Activated CD4-positive, alpha-beta memory T cell treated with anti-CD3 and anti-CD28 coated beads for 36 hours (primary cell): ENCODE measurements at regions of chr17 and their contacts with region 1.

Region 1: DNA sequence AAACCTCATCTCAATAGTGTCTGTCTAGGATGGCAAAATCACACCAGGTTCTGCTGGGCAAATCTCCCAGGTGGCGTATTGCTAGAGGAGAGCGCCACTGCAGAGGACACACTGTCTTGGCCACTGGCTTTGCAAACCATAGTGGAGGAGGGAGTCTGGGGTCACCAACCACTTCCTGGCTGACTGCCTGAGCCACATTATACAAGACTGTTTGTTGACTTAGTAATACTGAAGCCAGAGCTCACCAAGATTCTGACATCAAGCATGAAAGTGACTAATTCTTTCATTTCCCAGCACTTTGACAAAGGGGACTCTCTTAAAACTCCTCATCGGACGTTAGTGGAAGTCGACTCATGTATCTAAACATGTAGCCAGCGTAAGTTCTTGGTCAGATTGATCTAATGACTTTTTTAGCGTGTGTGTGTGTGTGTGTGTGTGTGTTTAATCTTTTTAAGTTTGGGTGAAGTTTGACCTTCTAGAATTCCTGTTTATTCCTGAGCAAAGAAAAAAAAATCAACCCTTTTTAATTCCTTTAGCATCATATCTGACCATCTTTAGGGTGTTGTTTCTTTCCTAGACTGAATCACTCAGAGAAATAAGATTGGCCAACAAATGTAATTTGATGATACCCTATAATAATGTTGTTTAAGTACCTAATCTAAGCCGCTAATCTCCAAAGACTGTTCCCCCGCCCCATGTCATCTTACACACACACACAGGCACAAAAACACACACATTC is 13.7 kb downstream of the PITPNC1 start:
- DNase-seq: peak; percentile 88
- H3K4me3 Mint-ChIP-seq: peak overlapping the region; percentile 65
- H3K27ac Mint-ChIP-seq: peak overlapping the region; percentile 96
- H3K4me1 Mint-ChIP-seq: peaks cover 80% of the 10 kb centered on the region
- H3K27me3 Mint-ChIP-seq: no peaks in the 10 kb centered on the region

Region 2: DNA sequence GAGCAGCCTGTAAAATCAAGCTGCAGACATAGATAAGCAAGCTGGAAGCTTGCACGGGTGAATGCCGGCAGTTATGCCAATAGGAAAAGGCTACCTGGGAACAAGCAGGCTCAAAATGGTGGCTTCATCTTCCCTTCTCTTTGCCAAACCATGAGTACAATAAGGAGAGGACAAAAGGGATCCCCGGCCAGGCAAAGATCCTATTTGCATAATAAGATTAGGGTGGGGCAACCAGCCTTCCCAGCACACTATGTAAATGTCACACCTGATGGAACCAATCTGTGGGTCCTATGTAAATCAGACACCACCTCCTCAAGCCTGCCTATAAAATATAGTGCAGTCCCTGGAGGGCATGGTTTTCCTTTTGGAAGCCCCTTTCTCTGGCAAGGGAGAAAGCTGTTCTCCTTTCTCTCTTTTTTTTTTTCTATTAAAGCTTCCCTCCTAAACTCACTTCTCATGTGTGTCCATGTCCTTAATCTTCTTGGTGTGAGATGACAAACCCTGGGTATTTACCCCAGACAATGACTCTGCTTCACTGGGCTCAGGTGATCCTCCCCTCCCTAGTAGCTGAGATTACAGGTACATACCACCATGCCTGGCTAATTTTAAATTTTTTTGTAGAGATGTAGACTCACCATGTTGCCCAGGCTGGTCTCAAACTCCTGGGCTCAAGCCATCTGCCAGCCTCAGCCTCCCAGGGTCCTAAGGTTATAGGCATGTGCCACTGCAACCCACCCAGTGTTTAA is 68.6 kb before region 1 on chr17:
- CTCF ChIA-PET with region 1: no interaction called
- POLR2A ChIA-PET with region 1: no interaction called
- intact Hi-C with region 1: no loop called
- DNase-seq: no peak
- H3K4me3 Mint-ChIP-seq: no peak overlapping the region
- H3K27ac Mint-ChIP-seq: no peak overlapping the region
- H3K4me1 Mint-ChIP-seq: no peaks in the 10 kb centered on the region
- H3K27me3 Mint-ChIP-seq: no peaks in the 10 kb centered on the region

Region 3: GRCh38 chr17:67343251-67343650 is 47.6 kb before region 1 on chr17:
- CTCF ChIA-PET with region 1: no interaction called
- POLR2A ChIA-PET with region 1: no interaction called
- intact Hi-C with region 1: no loop called
- DNase-seq: no peak
- H3K4me3 Mint-ChIP-seq: no peak overlapping the region
- H3K27ac Mint-ChIP-seq: no peak overlapping the region
- H3K4me1 Mint-ChIP-seq: no peaks in the 10 kb centered on the region
- H3K27me3 Mint-ChIP-seq: no peaks in the 10 kb centered on the region

Region 4: DNA sequence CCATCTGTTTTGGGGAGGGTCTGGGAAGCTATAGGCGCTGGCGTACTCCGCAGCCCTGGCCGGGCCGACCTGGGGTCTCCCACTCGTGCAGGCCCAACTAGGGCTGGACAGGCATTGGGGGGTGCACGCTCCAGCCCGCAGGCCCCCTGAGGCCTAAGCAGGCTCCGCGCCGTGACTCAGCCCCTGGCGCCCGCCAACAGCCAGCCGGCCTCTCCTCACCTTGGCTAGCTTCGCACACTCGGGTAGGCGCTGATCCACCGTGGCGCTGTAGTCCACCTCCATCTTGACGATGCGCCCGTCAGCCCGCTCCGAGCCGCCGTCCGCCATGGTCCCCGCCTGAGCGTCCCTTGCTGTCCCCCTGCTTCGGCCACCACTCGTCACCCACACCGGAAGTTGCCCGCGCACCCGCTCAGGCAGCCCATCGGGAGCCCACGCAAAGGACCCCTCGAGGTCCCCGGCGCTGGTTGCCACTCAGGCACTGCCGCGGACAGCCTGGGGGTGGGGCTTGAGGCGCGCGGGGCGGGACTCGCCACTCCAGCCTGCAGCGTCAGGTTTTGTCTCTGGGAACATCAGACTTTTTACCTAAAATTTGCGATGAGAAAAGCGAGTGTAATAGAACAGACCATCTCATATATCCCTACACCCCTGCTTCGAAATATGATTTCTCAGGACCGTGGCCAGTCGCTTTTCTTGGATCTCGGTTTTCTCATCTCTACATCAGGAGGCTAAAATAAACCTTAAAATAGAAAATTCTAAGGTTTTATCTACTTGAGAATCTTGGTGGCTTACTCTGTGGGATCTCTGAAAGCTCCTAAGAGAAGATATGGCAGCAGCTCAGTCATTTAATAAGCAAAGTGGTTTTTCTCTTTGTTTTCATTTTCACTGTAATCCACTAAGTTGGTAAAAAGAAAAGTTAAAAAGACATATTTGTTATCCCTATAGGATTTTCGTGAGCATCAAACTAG is 24.3 kb before region 1 on chr17 and contains the start of gene PSMD12:
- CTCF ChIA-PET with region 1: interaction called, 3 read pairs
- POLR2A ChIA-PET with region 1: interaction called, 4 read pairs
- intact Hi-C with region 1: loop called (anchors 1 kb)
- DNase-seq: peak; percentile 96
- H3K4me3 Mint-ChIP-seq: peak within 1 kb of the TSS; percentile 95
- H3K27ac Mint-ChIP-seq: peak within 1 kb of the TSS; percentile 98
- H3K4me1 Mint-ChIP-seq: peaks cover 45% of the 10 kb centered on the region
- H3K27me3 Mint-ChIP-seq: no peaks in the 10 kb centered on the region
- total RNA-seq, gene PSMD12: 94.0 to 98.6 TPM

Region 5: DNA sequence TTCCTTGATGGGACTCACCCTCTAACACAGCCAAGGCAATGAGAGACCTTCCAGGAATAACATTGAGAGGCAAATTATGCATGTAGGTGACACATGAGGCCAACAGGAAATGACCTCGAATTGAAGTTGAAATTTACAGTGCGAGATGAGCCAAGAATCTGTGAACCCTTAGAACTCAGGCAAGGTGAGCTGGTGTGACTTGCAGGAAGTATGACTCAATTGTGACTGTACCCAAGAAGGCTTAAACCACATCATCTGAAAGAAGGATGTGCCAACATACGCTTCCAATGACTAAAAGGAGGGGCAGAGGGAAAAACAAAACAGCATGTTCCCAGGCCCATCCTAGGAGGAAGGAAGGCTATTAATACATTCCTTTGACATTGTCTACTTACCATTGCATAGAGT is 31.1 kb after region 1 on chr17:
- CTCF ChIA-PET with region 1: interaction called, 13 read pairs
- POLR2A ChIA-PET with region 1: interaction called, 8 read pairs
- intact Hi-C with region 1: loop called (anchors 1 kb)
- DNase-seq: peak; percentile 71
- H3K4me3 Mint-ChIP-seq: peak overlapping the region; percentile 42
- H3K27ac Mint-ChIP-seq: peak overlapping the region; percentile 91
- H3K4me1 Mint-ChIP-seq: peaks cover 74% of the 10 kb centered on the region
- H3K27me3 Mint-ChIP-seq: no peaks in the 10 kb centered on the region

Region 6: GRCh38 chr17:67431249-67432048 is 40.6 kb after region 1 on chr17:
- CTCF ChIA-PET with region 1: interaction called, 13 read pairs
- POLR2A ChIA-PET with region 1: interaction called, 10 read pairs
- intact Hi-C with region 1: loop called (anchors 1 kb)
- DNase-seq: peak; percentile 36
- H3K4me3 Mint-ChIP-seq: peak overlapping the region; percentile 58
- H3K27ac Mint-ChIP-seq: peak overlapping the region; percentile 89
- H3K4me1 Mint-ChIP-seq: peaks cover 69% of the 10 kb centered on the region
- H3K27me3 Mint-ChIP-seq: no peaks in the 10 kb centered on the region

Region 7: DNA sequence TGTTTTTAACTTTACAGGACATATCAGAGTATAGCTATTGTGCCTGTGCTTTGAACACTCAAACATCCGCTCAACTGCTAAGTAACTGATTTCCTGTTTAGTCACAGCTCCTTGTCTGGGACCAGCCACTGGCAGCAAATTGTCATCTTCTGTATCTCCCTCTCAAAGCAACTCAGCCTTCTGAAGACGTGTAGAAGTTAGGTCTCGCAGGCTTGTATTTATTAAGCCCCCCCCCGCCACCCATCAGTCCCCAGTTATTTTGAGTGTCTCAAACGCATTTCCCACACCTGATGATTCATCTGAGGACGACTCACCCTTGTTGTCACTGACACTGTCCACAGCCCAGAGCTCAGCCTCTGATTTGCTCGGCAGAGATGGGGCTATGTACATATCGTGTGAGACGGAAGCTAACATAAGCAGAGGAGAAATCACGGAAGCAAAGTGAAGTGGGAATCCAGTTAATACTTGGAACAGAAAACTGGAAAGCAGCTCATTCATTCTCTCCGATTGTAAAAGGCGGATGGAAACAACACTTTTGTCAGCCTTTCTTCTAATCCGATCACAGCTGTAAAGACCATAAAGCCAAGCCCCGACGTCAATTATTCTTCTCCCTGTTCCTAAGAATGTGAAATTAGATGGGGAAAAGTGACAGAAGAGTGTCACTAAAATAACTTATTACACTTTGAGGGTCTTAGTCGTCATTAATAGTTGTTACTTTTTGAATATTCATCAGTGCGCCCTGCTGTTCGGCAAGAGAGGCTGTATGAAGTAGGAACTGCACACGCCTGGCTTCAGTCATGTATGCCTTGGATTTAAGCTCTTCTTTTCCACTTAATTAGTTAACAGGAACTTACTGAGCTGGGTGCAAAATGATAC is 50.5 kb after region 1 on chr17:
- CTCF ChIA-PET with region 1: interaction called, 17 read pairs
- POLR2A ChIA-PET with region 1: interaction called, 18 read pairs
- intact Hi-C with region 1: no loop called
- DNase-seq: peak; percentile 86
- H3K4me3 Mint-ChIP-seq: peak overlapping the region; percentile 84
- H3K27ac Mint-ChIP-seq: peak overlapping the region; percentile 99
- H3K4me1 Mint-ChIP-seq: peaks cover 62% of the 10 kb centered on the region
- H3K27me3 Mint-ChIP-seq: no peaks in the 10 kb centered on the region

Region 8: GRCh38 chr17:67452681-67453554 is 62.1 kb after region 1 on chr17:
- CTCF ChIA-PET with region 1: interaction called, 6 read pairs
- POLR2A ChIA-PET with region 1: interaction called, 3 read pairs
- intact Hi-C with region 1: loop called (anchors 1 kb)
- DNase-seq: peak; percentile 63
- H3K4me3 Mint-ChIP-seq: peak overlapping the region; percentile 55
- H3K27ac Mint-ChIP-seq: peak overlapping the region; percentile 95
- H3K4me1 Mint-ChIP-seq: peaks cover 83% of the 10 kb centered on the region
- H3K27me3 Mint-ChIP-seq: no peaks in the 10 kb centered on the region

Region 9: DNA sequence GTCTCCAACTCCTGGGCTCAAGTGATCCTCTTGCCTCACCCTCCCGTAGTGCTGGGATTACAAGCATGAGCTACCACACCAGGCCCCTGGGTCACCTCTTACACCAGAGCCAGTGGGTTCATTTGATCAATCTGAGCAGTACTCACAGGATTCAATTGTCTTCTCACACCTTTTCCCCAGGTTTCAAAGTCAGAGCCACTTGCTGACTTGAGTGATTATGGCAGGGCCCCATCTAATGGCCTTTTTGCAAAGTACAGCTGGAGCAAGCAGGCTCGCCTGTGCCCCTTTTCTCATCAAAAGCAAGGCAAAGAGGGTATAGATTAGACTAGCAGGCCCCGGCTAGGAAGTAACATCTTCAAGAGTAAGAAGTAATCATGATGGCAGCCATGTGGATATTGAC is 212.1 kb after region 1 on chr17:
- CTCF ChIA-PET with region 1: interaction called, 11 read pairs
- POLR2A ChIA-PET with region 1: interaction called, 3 read pairs
- intact Hi-C with region 1: loop called (anchors 1 kb)
- DNase-seq: peak; percentile 61
- H3K4me3 Mint-ChIP-seq: no peak overlapping the region
- H3K27ac Mint-ChIP-seq: no peak overlapping the region
- H3K4me1 Mint-ChIP-seq: peaks cover 10% of the 10 kb centered on the region
- H3K27me3 Mint-ChIP-seq: no peaks in the 10 kb centered on the region